Left colon (tissue), 2 donors: ENCODE measurements at regions of chr20 and their contacts with region 1.

Region 1: GRCh38 chr20:1212607-1213396 is 9.5 kb downstream of the C20orf202 start:
- DNase-seq: peak; percentile 60 to 76
- ATAC-seq: peak; percentile 98

Region 2: GRCh38 chr20:1033751-1034414 is 178.9 kb before region 1 on chr20:
- intact Hi-C with region 1: no loop called
- DNase-seq: peak in 1 of 2 donors; percentile 3
- ATAC-seq: no peak

Region 3: DNA sequence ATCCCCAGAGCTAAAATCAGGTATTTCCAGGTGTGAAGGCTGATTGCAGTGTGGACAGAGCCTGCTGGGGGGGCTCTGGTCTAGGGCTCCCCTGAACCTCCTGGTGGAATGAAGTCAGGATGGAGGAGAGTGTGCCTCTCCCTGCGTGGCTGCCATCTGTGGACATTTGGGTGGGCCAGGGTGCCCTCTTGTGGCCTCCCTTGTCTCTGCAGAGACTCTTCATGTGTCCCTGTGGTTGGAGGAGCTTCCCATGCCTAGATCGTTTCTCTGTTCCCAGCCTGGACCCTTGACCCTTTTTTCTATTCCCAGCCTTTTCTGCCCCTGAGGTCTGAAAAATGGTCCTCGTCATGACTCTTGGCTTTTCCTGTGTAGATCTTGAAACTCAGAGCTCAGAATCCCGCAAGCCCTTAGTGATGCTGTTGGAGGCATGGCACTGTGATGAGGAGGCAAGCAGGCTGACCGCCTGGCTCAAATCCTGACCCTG is 104.3 kb before region 1 on chr20:
- intact Hi-C with region 1: loop called in 1 of 2 experiments (anchors 10 kb)
- DNase-seq: peak; percentile 35 to 70
- ATAC-seq: peak; percentile 90